Right ventricle myocardium inferior (tissue), 1 donor: ENCODE measurements at regions of chr3 and their contacts with region 1.

Region 1: DNA sequence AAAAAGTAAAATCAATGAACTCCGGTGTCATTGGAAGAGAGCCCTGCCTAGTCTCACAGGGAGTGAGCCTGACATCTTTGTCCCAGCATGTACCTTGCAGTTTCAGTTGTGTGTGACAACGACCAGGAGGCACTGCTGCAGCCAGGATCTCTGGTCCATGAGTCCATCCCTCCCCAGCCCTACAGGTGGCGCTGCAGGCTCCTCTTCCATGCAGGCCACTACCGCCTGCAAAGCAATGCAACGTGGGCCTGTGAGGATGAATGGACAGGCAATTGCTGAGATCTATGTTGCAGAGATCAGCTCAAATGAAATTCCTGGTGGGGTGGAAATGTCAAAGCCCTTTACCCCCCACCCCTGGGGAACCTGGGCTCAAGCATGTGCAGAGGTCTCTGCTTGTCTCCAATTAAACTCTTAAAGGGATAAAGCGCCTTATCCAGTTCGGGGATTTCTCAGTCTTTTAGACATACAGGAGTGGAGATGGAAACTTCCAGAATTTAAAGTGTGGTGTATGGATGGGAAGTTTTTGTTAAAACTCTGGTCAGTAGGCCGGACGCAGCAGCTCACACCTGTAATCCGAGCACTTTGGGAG is 35.8 kb downstream of the TKT start:
- DNase-seq: peak; percentile 91
- ATAC-seq: peak; percentile 82

Region 2: GRCh38 chr3:52481819-52482521 is 738.0 kb before region 1 on chr3:
- intact Hi-C with region 1: no loop called
- DNase-seq: no peak
- ATAC-seq: no peak

Region 3: DNA sequence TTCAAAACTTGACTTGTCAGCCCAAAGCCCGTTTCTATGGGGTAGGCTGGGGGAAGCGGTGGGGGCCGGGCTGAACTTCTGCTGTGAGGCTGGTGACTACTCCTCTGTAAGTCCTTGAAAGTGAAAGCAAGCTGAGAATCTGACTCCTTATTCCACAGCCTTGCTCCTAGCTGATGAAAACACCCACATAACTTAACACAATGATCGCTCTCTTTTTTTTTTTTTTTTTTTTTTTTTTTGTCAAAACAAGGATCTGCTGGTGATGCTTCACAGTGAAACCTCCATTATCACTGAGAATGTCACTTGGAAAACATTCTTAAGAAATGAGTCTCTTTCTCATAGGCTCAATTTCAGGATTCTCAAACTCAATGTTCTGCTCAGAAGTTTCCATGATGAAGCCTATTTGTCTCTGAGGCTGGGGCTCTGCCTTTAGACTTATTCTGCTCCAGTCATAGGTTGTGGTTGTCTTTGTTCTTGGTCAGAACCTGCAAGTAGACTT is 67.2 kb after region 1 on chr3:
- intact Hi-C with region 1: loop called (anchors 5 kb)
- DNase-seq: no peak
- ATAC-seq: no peak